ENCODE measurements at regions of chr2 and their contacts with region 1.

Region 1: DNA sequence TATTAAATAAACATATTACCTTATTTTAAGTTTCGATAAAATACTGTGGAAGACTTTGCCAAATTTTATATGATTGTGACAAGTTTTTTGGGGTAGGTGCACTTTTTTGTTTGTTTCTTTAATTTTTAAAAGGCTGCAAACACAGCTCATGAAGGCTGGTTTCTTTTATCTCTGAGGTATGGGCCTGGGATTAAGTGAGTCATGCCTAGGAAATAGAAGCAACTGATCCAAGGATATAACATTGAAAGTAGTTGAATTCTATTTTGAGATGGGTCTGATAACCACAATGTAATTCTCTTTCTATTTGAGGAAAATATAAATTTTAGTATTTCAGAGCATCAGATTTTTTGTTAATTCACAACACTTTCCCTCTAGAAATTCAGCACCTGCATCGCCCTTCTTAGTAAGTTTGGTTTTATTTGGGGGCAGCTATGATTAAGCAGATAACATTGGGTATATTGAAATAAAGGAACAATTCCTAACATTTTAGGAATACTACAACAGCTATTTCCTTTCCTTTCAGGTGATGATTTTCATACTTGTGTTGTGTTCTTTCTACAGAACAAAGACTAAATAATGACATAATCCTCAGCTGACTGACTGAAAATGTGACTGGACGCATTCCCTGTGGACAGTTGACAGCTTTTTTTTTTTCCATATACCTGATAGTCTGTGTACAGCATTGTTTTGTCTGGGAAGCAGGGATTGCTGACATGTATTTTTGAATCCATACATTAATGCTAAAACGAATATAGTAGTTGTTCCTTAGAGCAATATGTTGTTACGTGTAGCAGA is 16.8 kb downstream of the RBM45 start:
- DNase-seq: no peak
- H3K4me3 Mint-ChIP-seq: no peak overlapping the region
- H3K27ac Mint-ChIP-seq: no peak overlapping the region
- H3K4me1 Mint-ChIP-seq: peaks cover 8% of the 10 kb centered on the region
- H3K27me3 Mint-ChIP-seq: no peaks in the 10 kb centered on the region
- CTCF ChIP-seq: no peak

Region 2: DNA sequence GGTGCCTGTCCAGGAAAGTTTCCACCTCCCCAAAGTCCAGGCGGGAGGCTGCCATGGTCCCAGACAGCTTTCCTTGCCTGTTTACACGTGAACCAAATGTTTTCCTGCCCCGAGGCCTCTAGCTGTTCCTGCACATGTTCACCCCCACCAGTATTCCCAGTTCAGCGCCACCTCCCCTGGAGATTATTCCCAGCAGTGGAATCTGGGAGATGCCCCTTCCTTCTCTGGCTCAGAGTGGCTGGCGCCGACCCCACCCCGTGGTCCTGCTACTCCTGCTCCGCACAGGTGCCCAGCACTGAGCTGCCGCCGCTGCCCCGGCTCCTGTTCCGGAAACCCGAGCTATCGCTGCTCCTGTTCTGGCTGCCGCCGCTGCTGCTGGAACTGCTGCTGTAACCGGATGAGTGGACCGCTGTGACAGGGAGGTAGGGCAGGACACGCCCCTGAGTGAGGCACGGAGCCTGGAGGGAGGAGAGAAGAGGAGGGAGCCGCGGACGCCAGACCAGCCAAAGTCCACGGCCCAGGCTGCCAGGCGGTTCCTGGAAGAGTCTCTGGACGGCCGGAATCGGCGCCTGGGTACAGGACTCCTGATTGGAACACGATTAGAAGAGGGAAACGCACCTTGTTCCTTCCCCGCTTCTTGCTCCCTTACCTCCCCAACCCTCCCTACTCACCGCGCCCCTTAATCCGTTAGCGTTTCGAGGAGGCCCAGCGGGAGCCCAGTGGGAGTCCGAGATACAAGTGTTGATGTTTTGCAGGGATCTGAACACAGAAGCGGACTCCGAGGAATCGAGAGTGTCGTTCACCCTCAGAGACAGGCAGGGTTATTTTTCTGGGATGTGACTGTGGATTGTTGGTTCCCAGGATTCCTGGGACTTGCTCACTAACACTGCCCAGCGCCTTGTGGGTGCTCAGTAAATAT is 56.4 kb before region 1 on chr2 and contains the start of gene PDE11A:
- CTCF ChIA-PET with region 1: no interaction called
- POLR2A ChIA-PET with region 1: no interaction called
- intact Hi-C with region 1: no loop called
- DNase-seq: peak; percentile 87
- H3K4me3 Mint-ChIP-seq: peak within 1 kb of the TSS; percentile 79
- H3K27ac Mint-ChIP-seq: peak within 1 kb of the TSS; percentile 32
- H3K4me1 Mint-ChIP-seq: peaks cover 25% of the 10 kb centered on the region
- H3K27me3 Mint-ChIP-seq: peaks cover 47% of the 10 kb centered on the region
- CTCF ChIP-seq: no peak
- total RNA-seq, gene PDE11A: not detected in 2 replicates

Region 3: DNA sequence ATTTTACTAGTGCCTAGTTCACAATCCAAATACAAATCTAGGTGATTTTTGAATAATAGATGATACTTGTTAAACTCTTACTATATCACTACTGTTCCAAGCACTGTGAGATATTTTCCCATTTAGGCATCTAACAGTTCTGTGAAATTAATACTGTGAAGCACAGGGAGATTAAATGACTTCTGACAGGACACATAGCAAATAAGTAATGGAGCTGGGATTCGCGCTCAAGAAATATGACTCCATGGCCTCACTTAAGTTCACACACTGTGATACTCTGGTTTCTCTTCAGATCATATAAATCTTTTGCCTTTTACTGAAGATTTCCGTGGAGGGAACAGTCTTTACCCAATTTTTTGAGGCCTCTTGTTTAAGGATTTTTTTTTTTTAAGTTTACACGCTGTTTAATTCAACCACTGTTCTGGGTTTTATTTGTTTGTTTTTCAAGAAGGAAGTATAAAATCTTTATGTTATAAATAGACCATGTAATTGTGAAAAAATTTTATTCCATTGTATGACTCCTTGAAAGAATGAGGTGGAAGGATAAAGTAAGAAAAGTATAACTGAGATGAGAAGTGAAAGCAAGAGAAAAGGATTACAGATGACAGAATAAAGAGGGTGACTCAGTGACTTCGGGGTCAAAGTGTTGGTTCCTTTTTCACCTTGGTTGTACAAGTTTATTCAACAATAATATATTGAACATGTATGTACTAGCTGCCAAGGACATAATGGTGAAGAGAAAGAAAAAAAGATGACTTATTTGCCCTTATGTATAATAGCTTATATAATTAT is 13.4 kb after region 1 on chr2:
- CTCF ChIA-PET with region 1: interaction called, 15 read pairs
- POLR2A ChIA-PET with region 1: interaction called, 3 read pairs
- intact Hi-C with region 1: no loop called
- DNase-seq: no peak
- H3K4me3 Mint-ChIP-seq: no peak overlapping the region
- H3K27ac Mint-ChIP-seq: no peak overlapping the region
- H3K4me1 Mint-ChIP-seq: no peaks in the 10 kb centered on the region
- H3K27me3 Mint-ChIP-seq: no peaks in the 10 kb centered on the region
- CTCF ChIP-seq: no peak

Region 4: GRCh38 chr2:178152033-178152432 is 23.0 kb after region 1 on chr2:
- CTCF ChIA-PET with region 1: interaction called, 17 read pairs
- POLR2A ChIA-PET with region 1: no interaction called
- intact Hi-C with region 1: no loop called
- DNase-seq: no peak
- H3K4me3 Mint-ChIP-seq: no peak overlapping the region
- H3K27ac Mint-ChIP-seq: no peak overlapping the region
- H3K4me1 Mint-ChIP-seq: no peaks in the 10 kb centered on the region
- H3K27me3 Mint-ChIP-seq: no peaks in the 10 kb centered on the region
- CTCF ChIP-seq: no peak

Region 5: DNA sequence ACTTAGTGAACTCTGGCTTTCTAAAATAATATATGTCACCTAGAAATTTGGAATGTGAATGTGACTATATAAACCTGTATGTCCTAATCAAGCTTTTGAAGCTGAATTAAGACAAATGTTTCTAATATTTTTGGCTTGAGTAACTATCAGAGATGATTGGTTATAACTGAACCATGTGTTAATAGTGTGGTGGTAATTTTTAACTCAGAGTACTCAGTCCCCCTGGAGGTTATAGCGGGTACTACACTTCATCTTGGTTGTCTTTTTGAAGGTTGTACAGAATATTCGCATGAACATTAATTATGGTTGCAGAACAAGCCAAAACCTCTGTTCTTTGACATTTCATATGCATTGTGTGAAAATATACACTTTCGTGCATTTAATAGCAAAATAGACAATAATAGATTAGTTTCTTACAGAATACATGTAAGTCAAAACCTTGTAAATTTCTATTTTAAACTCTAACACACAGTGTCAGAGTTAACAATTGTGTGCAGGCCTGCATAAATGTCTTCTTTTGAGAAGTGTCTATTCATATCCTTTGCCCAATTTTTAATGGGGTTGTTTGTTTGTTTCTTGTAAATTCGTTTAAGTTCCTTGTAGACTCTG is 151.3 kb after region 1 on chr2:
- CTCF ChIA-PET with region 1: interaction called, 8 read pairs
- POLR2A ChIA-PET with region 1: no interaction called
- intact Hi-C with region 1: loop called (anchors 1 kb)
- DNase-seq: peak; percentile 69
- H3K4me3 Mint-ChIP-seq: no peak overlapping the region
- H3K27ac Mint-ChIP-seq: no peak overlapping the region
- H3K4me1 Mint-ChIP-seq: peaks cover 47% of the 10 kb centered on the region
- H3K27me3 Mint-ChIP-seq: no peaks in the 10 kb centered on the region
- CTCF ChIP-seq: peak; percentile 71

Region 6: GRCh38 chr2:178397002-178397605 is 268.1 kb after region 1 on chr2:
- CTCF ChIA-PET with region 1: interaction called, 33 read pairs
- POLR2A ChIA-PET with region 1: interaction called, 3 read pairs
- intact Hi-C with region 1: loop called (anchors 1 kb)
- DNase-seq: peak; percentile 60
- H3K4me3 Mint-ChIP-seq: no peak overlapping the region
- H3K27ac Mint-ChIP-seq: no peak overlapping the region
- H3K4me1 Mint-ChIP-seq: peaks cover 5% of the 10 kb centered on the region
- H3K27me3 Mint-ChIP-seq: no peaks in the 10 kb centered on the region
- CTCF ChIP-seq: peak; percentile 51

Region 7: GRCh38 chr2:178404368-178404767 is 275.3 kb after region 1 on chr2:
- CTCF ChIA-PET with region 1: interaction called, 11 read pairs
- POLR2A ChIA-PET with region 1: no interaction called
- intact Hi-C with region 1: no loop called
- DNase-seq: peak; percentile 53
- H3K4me3 Mint-ChIP-seq: no peak overlapping the region
- H3K27ac Mint-ChIP-seq: no peak overlapping the region
- H3K4me1 Mint-ChIP-seq: peaks cover 9% of the 10 kb centered on the region
- H3K27me3 Mint-ChIP-seq: no peaks in the 10 kb centered on the region
- CTCF ChIP-seq: no peak

Measured in MCF 10A (cell line).